Activated T-helper 1 cell treated with anti-CD3 and anti-CD28 coated beads, Interleukin-12 subunit alpha, Interleukin-12 subunit beta, Interleukin-2, Interleukin-4 antibody, amounts not matched to agents 30 ng/mL and 10 ng/mL and 1 ng/mL, durations not matched to agents 14 hours and 24 hours and 36 hours (primary cell): ENCODE measurements at regions of chr9 and their contacts with region 1.

Region 1: GRCh38 chr9:109012876-109013678 is at the start of gene CTNNAL1:
- DNase-seq: peak; percentile 82
- H3K4me3 Mint-ChIP-seq: peak within 1 kb of the TSS; percentile 95
- H3K27ac Mint-ChIP-seq: peak within 1 kb of the TSS; percentile 94
- H3K4me1 Mint-ChIP-seq: peaks cover 39% of the 10 kb centered on the region
- H3K27me3 Mint-ChIP-seq: peaks cover 2% of the 10 kb centered on the region
- total RNA-seq, gene CTNNAL1: 24.8 and 25.1 TPM in 2 replicates

Region 2: GRCh38 chr9:107282753-107283625 is 1730.1 kb before region 1 on chr9 and contains the start of gene RAD23B:
- intact Hi-C with region 1: loop called (anchors 5 kb)
- DNase-seq: peak; percentile 97
- H3K4me3 Mint-ChIP-seq: peak within 1 kb of the TSS; percentile 96
- H3K27ac Mint-ChIP-seq: peak within 1 kb of the TSS; percentile 95
- H3K4me1 Mint-ChIP-seq: peaks cover 54% of the 10 kb centered on the region
- H3K27me3 Mint-ChIP-seq: no peaks in the 10 kb centered on the region
- total RNA-seq, gene RAD23B: 138 and 153 TPM in 2 replicates

Region 3: DNA sequence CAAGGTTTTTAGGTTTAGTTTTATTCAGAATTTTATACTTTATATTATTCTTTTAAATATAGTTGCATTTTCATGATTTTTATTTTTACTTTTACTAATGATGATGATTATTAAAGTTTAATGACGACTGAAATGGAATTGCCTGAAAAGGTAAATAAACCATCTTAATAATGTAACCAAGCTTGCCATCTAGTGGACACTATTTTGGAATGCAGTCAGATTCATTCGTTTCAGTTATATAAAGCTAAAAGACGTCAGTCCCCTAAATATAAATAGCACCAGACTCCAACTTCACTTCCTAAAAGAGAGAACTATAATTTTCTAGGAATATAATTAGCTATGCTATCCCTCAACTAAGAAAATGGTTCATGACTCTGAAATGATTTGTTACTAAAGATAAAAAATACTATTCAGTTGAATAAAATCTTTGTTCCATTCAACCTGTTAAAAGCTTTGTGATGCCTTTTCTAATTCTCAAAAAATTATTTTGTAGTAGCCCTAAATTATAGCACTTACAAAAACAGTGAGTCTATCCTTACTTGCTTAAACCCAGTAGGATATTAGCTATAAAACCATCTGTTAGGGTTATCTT is 59.0 kb before region 1 on chr9:
- intact Hi-C with region 1: no loop called
- DNase-seq: no peak
- H3K4me3 Mint-ChIP-seq: no peak overlapping the region
- H3K27ac Mint-ChIP-seq: no peak overlapping the region
- H3K4me1 Mint-ChIP-seq: no peaks in the 10 kb centered on the region
- H3K27me3 Mint-ChIP-seq: no peaks in the 10 kb centered on the region

Region 4: GRCh38 chr9:109001275-109001676 is 11.8 kb before region 1 on chr9:
- intact Hi-C with region 1: loop called (anchors 1 kb)
- DNase-seq: no peak
- H3K4me3 Mint-ChIP-seq: no peak overlapping the region
- H3K27ac Mint-ChIP-seq: no peak overlapping the region
- H3K4me1 Mint-ChIP-seq: peaks cover 6% of the 10 kb centered on the region
- H3K27me3 Mint-ChIP-seq: peaks cover 2% of the 10 kb centered on the region

Region 5: DNA sequence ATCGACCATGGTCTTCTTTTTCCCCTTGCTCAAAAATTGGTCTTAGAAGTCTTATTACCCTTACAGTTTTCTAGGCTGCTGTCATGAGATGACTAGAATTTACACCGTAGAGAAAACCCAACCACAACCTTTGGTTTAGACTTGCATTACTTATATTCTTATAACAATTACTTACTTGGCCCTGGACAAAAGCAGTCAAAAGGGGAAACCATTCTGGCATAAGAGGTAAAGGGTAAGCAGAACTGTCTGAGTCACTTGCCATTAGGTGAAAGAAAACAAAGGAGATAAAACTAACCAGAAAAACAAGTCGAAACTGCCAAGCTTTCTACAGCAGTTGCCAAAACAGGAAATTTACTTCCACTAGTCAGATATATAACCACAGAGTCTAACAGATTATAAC is 88.7 kb after region 1 on chr9:
- intact Hi-C with region 1: loop called (anchors 1 kb)
- DNase-seq: peak; percentile 14
- H3K4me3 Mint-ChIP-seq: peak overlapping the region; percentile 46
- H3K27ac Mint-ChIP-seq: peak overlapping the region; percentile 73
- H3K4me1 Mint-ChIP-seq: peaks cover 65% of the 10 kb centered on the region
- H3K27me3 Mint-ChIP-seq: no peaks in the 10 kb centered on the region

Region 6: GRCh38 chr9:109182940-109183798 is 170.1 kb after region 1 on chr9:
- intact Hi-C with region 1: loop called (anchors 1 kb)
- DNase-seq: no peak
- H3K4me3 Mint-ChIP-seq: no peak overlapping the region
- H3K27ac Mint-ChIP-seq: no peak overlapping the region
- H3K4me1 Mint-ChIP-seq: peaks cover 7% of the 10 kb centered on the region
- H3K27me3 Mint-ChIP-seq: peaks cover 42% of the 10 kb centered on the region

Region 7: DNA sequence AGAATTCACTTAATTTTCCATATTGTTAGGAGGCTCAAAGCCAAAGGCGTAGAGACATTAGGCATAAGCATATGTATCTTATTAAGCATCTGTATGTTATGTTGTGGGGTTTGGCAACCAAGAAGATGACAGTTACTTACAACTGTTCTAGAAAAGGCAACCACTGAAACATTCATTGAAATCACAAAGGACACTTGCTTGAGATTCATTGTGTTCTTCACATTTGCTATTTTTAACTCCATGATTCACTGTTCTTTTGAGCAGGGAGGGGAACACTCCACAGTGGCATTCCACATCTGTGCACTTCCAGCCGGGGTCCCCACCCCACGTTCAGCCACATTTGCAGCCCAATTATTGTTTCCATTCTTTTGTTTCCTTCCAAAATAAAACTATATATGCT is 874.0 kb after region 1 on chr9:
- intact Hi-C with region 1: loop called (anchors 5 kb)
- DNase-seq: no peak
- H3K4me3 Mint-ChIP-seq: peak overlapping the region; percentile 64
- H3K27ac Mint-ChIP-seq: peak overlapping the region; percentile 92
- H3K4me1 Mint-ChIP-seq: peaks cover 94% of the 10 kb centered on the region
- H3K27me3 Mint-ChIP-seq: no peaks in the 10 kb centered on the region